Activated B cell treated with CpG ODN at 0.5 μM for 24 hours (primary cell): ENCODE measurements at regions of chr15 and their contacts with region 1.

Region 1: GRCh38 chr15:76994971-76995945 is at the start of gene PSTPIP1:
- DNase-seq: peak; percentile 64
- ATAC-seq: peak; percentile 90
- H3K4me3 Mint-ChIP-seq: peak within 1 kb of the TSS; percentile 88
- H3K27ac Mint-ChIP-seq: peak within 1 kb of the TSS; percentile 95
- H3K4me1 Mint-ChIP-seq: peaks cover 60% of the 10 kb centered on the region
- H3K27me3 Mint-ChIP-seq: no peaks in the 10 kb centered on the region
- CTCF ChIP-seq: no peak
- total RNA-seq, gene PSTPIP1: 33.7 and 42.7 TPM in 2 replicates

Region 2: DNA sequence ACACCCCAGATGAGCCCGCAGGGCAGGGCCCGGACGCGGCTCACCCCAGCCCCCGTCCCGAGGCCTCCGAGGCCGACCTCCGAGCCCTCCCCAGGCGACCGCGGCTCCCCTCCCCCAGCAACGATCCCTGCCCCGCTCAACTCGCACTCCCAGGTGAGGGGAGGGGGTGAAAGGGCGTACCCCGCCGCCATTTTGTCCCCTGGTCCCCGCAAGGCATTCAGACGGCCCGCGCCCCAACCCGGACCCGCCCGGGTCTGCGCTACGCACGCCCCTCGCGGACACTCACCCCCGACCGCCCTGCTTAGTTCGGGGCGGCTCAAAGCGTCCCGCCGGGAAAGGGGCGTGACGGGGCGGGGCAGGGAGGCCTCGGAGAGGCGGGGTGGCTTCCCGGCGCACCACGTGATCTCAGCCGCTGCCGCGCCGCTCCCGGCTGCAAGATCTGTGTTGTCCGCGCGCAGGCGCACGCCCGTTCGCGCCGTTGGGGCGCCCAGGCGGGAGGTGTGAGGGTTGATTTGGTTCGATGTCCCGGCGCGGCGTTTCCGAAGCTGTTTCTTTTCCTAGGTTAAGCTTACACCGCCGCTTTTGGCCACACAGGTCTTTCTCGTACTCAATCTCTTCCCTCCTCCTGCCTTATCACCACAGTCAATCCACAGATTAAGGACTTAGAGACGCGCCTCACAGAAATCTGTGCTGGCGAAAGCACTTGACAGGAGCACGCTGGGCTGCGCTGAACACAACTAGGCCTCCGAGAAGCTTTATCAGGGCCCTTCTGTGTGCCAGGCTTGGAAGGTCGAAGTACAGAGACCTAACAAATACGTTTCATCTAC is 90.0 kb before region 1 on chr15 and contains the start of gene SCAPER:
- CTCF ChIA-PET with region 1: no interaction called
- POLR2A ChIA-PET with region 1: interaction called, 12 read pairs
- intact Hi-C with region 1: no loop called
- DNase-seq: peak; percentile 92
- ATAC-seq: peak; percentile 86
- H3K4me3 Mint-ChIP-seq: peak within 1 kb of the TSS; percentile 94
- H3K27ac Mint-ChIP-seq: peak within 1 kb of the TSS; percentile 87
- H3K4me1 Mint-ChIP-seq: peaks cover 48% of the 10 kb centered on the region
- H3K27me3 Mint-ChIP-seq: no peaks in the 10 kb centered on the region
- CTCF ChIP-seq: no peak
- total RNA-seq, gene SCAPER: 28.9 and 38.8 TPM in 2 replicates

Region 3: GRCh38 chr15:76954744-76955143 is 40.5 kb before region 1 on chr15:
- CTCF ChIA-PET with region 1: no interaction called
- POLR2A ChIA-PET with region 1: no interaction called
- intact Hi-C with region 1: no loop called
- DNase-seq: no peak
- ATAC-seq: no peak
- H3K4me3 Mint-ChIP-seq: no peak overlapping the region
- H3K27ac Mint-ChIP-seq: no peak overlapping the region
- H3K4me1 Mint-ChIP-seq: no peaks in the 10 kb centered on the region
- H3K27me3 Mint-ChIP-seq: no peaks in the 10 kb centered on the region
- CTCF ChIP-seq: no peak

Region 4: DNA sequence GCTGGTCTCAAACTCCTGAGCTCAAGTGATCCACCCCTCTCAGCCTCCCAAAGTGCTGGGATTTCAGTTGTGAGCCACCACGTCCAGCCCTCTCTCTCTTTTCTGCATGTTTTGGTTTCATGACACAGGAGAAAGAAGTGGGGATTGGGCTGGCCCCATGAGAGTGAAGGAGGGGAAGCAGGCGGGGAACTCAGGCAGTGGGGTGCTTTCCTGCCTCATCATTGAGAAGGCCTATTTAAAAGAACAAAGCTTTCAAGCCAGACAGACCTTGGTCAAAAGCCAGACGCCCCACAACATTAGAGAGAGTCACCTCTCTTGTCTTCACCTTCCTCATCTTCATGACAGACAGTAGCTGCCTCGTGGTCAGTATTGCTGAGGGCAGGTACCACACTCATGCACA is 15.6 kb after region 1 on chr15:
- CTCF ChIA-PET with region 1: interaction called, 3 read pairs
- POLR2A ChIA-PET with region 1: interaction called, 11 read pairs
- intact Hi-C with region 1: loop called (anchors 1 kb)
- DNase-seq: no peak
- ATAC-seq: no peak
- H3K4me3 Mint-ChIP-seq: no peak overlapping the region
- H3K27ac Mint-ChIP-seq: peak overlapping the region; percentile 36
- H3K4me1 Mint-ChIP-seq: peaks cover 73% of the 10 kb centered on the region
- H3K27me3 Mint-ChIP-seq: no peaks in the 10 kb centered on the region
- CTCF ChIP-seq: no peak

Region 5: GRCh38 chr15:77768107-77768506 is 772.8 kb after region 1 on chr15:
- CTCF ChIA-PET with region 1: no interaction called
- POLR2A ChIA-PET with region 1: no interaction called
- intact Hi-C with region 1: no loop called
- DNase-seq: no peak
- ATAC-seq: no peak
- H3K4me3 Mint-ChIP-seq: no peak overlapping the region
- H3K27ac Mint-ChIP-seq: no peak overlapping the region
- H3K4me1 Mint-ChIP-seq: no peaks in the 10 kb centered on the region
- H3K27me3 Mint-ChIP-seq: peaks cover 31% of the 10 kb centered on the region
- CTCF ChIP-seq: no peak